ENCODE measurements at regions of chr19 and their contacts with region 1.

Region 1: DNA sequence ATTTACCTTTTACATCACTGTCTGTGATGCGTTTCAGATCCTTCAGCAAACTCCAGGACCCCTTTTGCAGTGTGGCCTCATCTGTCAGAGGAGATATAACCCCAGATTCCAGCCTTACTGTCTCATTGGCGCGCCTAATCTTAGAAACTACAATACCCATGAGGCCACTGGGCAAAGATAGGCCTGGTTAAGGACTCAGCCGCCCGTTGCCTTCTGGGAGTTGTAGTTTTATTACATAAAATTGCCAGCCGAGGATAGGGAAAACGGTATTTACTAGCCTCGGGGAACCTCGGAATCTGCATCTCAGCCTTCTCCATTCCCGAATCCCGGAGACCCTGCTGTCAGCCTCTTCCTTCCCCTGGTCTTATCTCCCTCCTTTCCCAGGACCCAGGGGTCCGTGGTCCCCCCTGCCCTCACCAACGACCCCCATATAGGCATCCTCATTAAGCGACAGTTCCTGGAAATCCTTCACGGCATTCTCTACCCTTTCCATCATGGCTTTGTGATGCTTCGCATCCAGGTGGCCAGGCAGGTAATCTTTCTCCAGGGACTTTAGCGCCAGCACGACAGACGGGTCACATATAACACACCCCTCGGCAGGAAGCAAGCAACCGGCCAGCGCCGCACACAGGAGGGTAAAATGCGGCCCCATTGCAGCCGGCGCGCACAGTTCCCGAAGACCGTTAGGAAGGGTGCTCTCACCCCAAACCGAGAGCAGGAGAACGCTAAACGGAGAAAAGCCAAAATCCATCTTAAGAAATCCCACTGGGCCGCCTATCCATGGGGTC is 1.3 kb downstream of the IZUMO1 start:
- DNase-seq: peak; percentile 86
- H3K4me3 Mint-ChIP-seq: no peak overlapping the region
- H3K27ac Mint-ChIP-seq: peak overlapping the region; percentile 57
- H3K4me1 Mint-ChIP-seq: peaks cover 17% of the 10 kb centered on the region
- H3K27me3 Mint-ChIP-seq: peaks cover 8% of the 10 kb centered on the region

Region 2: DNA sequence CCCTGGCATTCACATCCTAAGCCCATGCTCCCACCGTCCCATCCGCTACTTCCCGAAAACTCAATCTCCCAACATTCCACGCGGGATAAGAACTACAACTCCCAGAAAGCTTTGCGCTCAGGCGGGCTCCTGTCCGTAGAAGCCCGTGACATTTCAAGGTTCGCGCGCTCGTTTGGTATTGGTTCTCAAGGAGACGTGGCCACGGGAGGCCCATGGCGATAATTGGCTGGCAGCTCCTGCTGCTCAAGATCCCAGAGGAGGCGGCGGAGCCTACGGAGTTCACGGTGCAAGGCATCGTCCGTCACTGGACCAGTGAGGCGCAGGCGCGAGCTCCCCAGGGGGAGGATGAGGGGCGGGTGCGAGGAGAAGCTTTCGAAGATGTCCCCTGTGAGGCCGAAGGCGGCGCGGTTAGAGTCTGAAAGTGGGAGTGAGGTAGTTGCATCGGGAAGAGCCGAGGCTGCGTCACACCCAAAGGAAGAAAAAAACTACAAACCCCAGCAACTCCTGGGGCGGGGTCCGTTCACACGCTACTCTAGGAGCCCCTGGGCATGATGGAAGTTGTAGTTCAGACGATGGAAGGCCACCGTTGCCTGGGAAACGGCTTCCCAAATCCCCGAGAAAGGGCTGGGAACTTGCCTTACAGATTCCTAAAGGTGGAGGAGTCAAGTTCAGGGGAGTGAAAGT is 24.6 kb before region 1 on chr19:
- intact Hi-C with region 1: loop called (anchors 1 kb)
- DNase-seq: peak; percentile 98
- H3K4me3 Mint-ChIP-seq: peak overlapping the region; percentile 91
- H3K27ac Mint-ChIP-seq: peak overlapping the region; percentile 97
- H3K4me1 Mint-ChIP-seq: peaks cover 12% of the 10 kb centered on the region
- H3K27me3 Mint-ChIP-seq: no peaks in the 10 kb centered on the region

Region 3: GRCh38 chr19:48770260-48770659 is 24.9 kb after region 1 on chr19:
- intact Hi-C with region 1: no loop called
- DNase-seq: no peak
- H3K4me3 Mint-ChIP-seq: no peak overlapping the region
- H3K27ac Mint-ChIP-seq: no peak overlapping the region
- H3K4me1 Mint-ChIP-seq: no peaks in the 10 kb centered on the region
- H3K27me3 Mint-ChIP-seq: peaks cover 12% of the 10 kb centered on the region

Measured in activated CD4-positive, alpha-beta T cell treated with anti-CD3 and anti-CD28 coated beads, Interleukin-2, amount 10 ng/mL, durations not matched to agents 24 days and 14 days (primary cell).